ENCODE measurements at regions of chr7 and their contacts with region 1.

Region 1: GRCh38 chr7:108497082-108497725 is 28.7 kb downstream of the PNPLA8 start:
- DNase-seq: peak in 1 of 3 donors; percentile 72
- ATAC-seq: peak; percentile 73
- H3K4me3 ChIP-seq: no peak overlapping the region
- H3K4me1 ChIP-seq: no peaks in the 10 kb centered on the region
- CTCF ChIP-seq: peak; percentile 62

Region 2: DNA sequence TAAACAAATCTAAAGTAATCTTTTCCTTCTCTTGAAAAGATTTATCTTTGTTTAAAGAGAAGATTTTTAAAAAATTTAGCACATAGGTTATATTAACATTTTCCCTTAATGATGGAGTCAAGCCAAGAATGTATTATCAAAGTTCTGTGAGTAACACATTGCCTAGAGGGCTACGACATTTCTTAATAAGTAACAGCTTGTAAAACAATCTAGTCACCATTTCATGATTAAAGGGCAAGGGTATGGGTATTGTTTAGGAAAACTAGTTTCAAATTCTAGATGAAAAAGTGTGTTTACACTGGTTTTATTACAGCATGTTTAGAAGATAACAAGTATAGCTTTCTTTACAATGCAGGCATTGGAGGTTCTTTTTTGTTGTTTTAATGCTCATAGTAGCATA is 338.4 kb before region 1 on chr7:
- intact Hi-C with region 1: no loop called
- DNase-seq: no peak
- ATAC-seq: no peak
- H3K4me3 ChIP-seq: no peak overlapping the region
- H3K4me1 ChIP-seq: no peaks in the 10 kb centered on the region
- CTCF ChIP-seq: no peak

Region 3: DNA sequence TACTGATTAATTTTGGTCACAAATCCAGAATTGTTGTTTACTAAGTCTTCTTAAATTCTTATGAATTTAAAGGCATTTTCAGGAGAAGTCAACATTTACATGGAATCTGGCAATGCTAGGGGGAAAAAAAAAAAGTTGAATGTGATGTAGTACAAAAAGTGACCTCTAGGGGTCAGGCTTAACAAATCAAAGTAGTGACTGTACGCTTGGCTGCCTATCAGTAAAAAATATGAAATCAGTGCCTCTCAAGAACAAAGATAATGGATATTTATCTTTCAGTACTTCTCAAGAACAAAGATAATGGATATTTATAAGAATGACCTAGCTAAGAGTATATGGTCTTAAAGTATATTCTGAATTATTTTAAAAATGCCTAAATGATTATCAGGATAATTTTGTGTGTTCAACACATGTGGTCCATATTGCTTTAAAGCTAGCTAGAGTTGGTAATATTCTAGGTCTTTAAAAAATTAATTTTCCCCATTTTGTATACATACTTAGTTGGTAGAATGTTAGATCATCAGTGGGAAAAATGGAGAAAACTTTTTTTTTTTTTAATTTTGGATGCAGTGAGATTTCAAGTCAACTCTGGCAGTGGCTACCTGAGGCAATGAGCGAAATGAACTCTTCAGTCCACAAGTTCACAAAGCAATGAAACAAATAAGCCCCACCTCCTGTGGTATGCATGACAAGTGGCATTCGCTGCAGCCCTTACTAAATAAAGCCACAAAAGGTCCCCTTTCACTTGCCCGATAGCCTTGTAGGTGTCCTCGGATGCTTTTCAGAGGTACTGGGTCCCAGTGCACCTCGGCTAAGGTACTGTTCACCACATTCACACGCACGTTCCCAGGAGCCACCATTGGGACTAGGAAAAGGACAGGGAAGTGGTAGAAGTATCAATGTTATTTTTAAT is 315.9 kb before region 1 on chr7:
- intact Hi-C with region 1: loop called (anchors 5 to 10 kb)
- DNase-seq: peak in 1 of 3 donors; percentile 17
- ATAC-seq: peak; percentile 66
- H3K4me3 ChIP-seq: no peak overlapping the region
- H3K4me1 ChIP-seq: no peaks in the 10 kb centered on the region
- CTCF ChIP-seq: peak; percentile 42